Posterior vena cava (tissue), 2 donors: ENCODE measurements at regions of chr3 and their contacts with region 1.

Region 1: DNA sequence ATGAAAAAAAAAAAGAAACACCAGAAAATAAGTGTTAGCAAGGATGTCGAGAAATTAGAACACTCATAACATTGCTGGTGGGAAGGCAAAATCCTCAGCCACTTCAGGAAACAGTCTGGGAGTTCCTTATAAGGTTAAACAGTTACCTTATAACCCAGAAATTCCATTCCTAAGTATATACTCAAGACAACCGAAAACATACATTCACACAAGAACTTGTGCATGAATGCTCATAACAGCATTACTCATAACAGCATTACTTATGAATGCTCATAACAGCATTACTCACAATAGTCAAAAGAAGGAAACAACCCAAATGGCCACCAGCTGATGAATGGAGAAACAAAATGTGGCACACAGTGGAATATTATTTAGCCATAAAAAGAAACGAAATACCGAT is 34.8 kb upstream of the DCP1A start:
- DNase-seq: no peak

Region 2: DNA sequence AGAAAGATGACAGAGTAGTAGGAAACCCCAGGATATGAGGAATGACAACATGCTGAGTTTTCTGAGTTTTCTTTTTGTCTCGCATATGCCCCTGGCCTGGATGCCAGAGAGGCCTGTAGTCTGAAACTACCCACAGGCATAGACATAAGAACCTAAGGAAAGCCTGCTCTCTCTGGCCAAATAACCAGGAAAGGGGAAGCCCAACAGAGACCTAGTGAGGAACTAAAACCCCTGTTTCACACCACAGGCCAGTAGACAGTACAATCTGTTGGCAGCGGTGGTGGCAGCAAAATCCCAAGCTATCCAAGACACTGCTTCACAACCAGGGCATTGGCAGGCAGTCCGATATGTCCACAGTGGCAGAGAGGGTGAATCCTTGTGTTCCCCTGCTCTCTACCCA is 20.2 kb after region 1 on chr3:
- intact Hi-C with region 1: no loop called
- DNase-seq: no peak

Region 3: GRCh38 chr3:53581671-53582070 is 199.6 kb after region 1 on chr3:
- intact Hi-C with region 1: no loop called
- DNase-seq: no peak

Region 4: GRCh38 chr3:53657651-53658050 is 275.5 kb after region 1 on chr3:
- intact Hi-C with region 1: loop called in 1 of 2 experiments (anchors 2 kb)
- DNase-seq: no peak